ENCODE measurements at regions of chr3 and their contacts with region 1.

Region 1: DNA sequence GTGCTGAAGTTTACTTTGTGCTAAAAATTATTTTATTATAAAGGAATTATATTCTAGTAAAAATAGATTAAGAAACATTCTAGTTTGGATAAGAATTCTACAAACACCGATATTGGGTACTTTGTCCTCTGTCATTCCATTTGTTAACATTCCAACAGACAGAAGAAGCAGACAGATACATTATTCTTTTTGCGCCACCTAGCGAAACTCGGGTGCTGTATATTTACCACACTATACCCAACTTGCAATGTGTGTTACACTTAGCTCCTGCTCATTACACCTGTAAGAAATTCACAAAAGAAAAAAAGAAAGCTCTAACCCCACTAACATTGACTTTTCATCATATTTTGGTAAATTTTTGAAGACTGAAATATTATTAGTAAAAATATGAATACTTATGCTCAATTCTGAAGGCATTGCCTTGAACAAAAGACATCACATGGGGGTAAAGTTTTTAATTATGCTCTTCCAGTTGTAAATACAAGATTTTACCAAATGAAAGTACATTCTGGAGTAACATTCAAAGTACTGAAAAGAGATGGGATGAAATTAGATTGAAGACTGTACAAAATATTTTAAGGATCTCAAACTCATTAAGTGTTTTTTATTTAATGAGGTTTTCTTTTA is 136.5 kb upstream of the MLF1 start:
- DNase-seq: peak; percentile 64 to 69
- H3K4me3 ChIP-seq: no peak overlapping the region
- H3K4me3 Mint-ChIP-seq: no peak overlapping the region
- H3K27ac Mint-ChIP-seq: no peak overlapping the region
- H3K4me1 ChIP-seq: peaks cover 24% of the 10 kb centered on the region
- H3K4me1 Mint-ChIP-seq: no peaks in the 10 kb centered on the region
- H3K27me3 ChIP-seq: no peaks in the 10 kb centered on the region
- H3K27me3 Mint-ChIP-seq: no peaks in the 10 kb centered on the region
- CTCF ChIP-seq: peak; percentile 55 to 69

Region 2: DNA sequence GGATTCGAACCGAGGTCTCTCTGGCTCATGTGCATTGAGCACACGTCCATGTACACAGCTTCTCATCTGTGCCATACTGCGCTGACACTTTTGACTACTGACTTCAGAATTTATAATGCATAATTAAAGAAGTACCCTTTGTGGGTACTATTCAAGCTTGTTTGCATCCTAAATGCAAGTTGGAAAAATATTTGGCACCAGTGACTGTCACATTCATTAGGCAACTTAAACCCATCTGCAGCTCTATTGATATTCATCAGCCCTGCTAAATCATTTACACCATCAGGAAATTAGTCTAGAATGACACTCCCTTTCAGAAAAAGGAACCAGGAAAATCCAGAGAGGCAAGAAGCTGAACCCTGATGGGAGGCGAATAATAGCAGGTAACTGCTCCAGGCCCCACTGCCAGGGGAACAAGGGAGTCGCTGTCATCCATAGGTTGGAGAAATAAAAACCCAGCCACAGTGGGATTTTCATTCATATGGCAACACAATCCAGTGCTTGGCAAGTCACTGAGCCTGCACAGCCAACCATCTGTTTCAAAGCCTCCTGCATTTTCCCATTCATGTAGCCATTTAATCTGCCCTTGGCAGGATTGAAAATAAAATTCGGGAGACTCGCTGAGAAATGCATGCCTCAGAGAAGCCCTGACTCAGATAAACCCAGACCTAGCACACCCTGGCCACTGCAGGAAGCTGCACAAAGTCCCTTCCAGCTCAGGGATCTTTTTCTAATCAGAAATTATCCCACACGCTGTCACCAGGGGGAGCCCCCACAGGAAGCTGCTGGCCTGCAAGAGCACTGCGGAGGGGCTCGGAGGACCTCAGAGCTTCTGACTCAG is 828.3 kb before region 1 on chr3:
- CTCF ChIA-PET with region 1: no interaction called
- POLR2A ChIA-PET with region 1: no interaction called
- intact Hi-C with region 1: loop called (anchors 2 kb)
- DNase-seq: peak; percentile 72 to 79
- H3K4me3 ChIP-seq: no peak overlapping the region
- H3K4me3 Mint-ChIP-seq: no peak overlapping the region
- H3K27ac Mint-ChIP-seq: no peak overlapping the region
- H3K4me1 ChIP-seq: 0 out of 2 replicates have a peak, but pooled peaks cover 5% of the 10 kb centered on the region
- H3K4me1 Mint-ChIP-seq: no peaks in the 10 kb centered on the region
- H3K27me3 ChIP-seq: no peaks in the 10 kb centered on the region
- H3K27me3 Mint-ChIP-seq: no peaks in the 10 kb centered on the region
- CTCF ChIP-seq: peak; percentile 70 to 83

Region 3: DNA sequence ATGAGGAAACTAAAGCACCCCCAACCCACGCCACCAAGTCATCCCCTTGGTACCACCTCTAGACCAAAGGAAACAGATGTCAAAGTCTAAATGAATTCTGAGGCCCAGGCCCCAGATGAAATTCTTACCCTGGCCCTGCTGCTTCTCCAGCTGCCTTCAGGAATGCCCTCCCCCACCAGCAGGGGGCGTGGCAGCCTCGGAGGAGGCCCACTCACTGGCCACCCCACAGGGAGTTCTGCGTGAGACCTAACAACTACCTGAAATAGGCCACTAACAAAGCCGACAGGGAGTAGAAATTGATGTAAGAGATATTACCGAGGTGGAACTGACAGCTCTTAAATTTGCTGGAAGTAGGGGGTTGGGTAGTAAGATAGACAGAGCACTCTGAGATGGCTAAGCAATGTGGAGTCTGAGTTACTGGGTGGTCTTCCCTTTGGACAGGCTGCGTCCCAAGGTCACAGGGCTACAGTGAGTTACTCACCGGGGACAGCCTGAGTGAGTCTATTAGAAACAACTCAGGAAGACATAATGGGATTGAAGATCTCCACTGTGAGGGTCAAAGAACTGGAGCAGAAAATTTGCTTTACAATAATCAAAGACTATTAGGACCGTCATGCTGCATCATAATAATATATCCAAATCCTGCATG is 569.0 kb before region 1 on chr3:
- CTCF ChIA-PET with region 1: no interaction called
- POLR2A ChIA-PET with region 1: no interaction called
- intact Hi-C with region 1: loop called (anchors 1 kb)
- DNase-seq: peak; percentile 53 to 74
- H3K4me3 ChIP-seq: no peak overlapping the region
- H3K4me3 Mint-ChIP-seq: no peak overlapping the region
- H3K27ac Mint-ChIP-seq: no peak overlapping the region
- H3K4me1 ChIP-seq: no peaks in the 10 kb centered on the region
- H3K4me1 Mint-ChIP-seq: no peaks in the 10 kb centered on the region
- H3K27me3 ChIP-seq: no peaks in the 10 kb centered on the region
- H3K27me3 Mint-ChIP-seq: peaks cover 4% of the 10 kb centered on the region
- CTCF ChIP-seq: peak; percentile 74 to 85

Region 4: DNA sequence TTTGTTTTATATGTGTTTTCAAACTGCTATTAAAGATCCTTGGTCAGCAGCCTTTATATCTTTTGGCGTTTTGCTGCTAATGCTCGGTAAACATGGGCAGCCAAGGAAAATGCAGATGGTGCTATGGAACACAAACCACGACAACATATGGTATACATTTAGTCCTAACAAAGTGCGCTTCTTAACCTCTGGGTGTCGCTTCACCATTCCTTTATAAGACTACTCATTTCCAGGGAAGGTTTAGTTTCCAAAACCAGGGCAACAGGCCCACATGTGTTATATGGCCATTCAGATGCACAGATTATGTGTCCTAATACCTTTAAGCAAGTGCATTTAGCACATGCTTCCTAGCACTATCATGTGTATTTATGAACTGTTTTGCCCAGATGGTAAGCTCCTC is 343.0 kb before region 1 on chr3:
- CTCF ChIA-PET with region 1: no interaction called
- POLR2A ChIA-PET with region 1: no interaction called
- intact Hi-C with region 1: loop called (anchors 1 kb)
- DNase-seq: no peak
- H3K4me3 ChIP-seq: no peak overlapping the region
- H3K4me3 Mint-ChIP-seq: no peak overlapping the region
- H3K27ac Mint-ChIP-seq: no peak overlapping the region
- H3K4me1 ChIP-seq: no peaks in the 10 kb centered on the region
- H3K4me1 Mint-ChIP-seq: no peaks in the 10 kb centered on the region
- H3K27me3 ChIP-seq: no peaks in the 10 kb centered on the region
- H3K27me3 Mint-ChIP-seq: no peaks in the 10 kb centered on the region
- CTCF ChIP-seq: peak in 1 of 2 experiments; percentile 31

Region 5: GRCh38 chr3:158337110-158337509 is 97.4 kb before region 1 on chr3:
- CTCF ChIA-PET with region 1: no interaction called
- POLR2A ChIA-PET with region 1: no interaction called
- intact Hi-C with region 1: no loop called
- DNase-seq: no peak
- H3K4me3 ChIP-seq: no peak overlapping the region
- H3K4me3 Mint-ChIP-seq: no peak overlapping the region
- H3K27ac Mint-ChIP-seq: no peak overlapping the region
- H3K4me1 ChIP-seq: no peaks in the 10 kb centered on the region
- H3K4me1 Mint-ChIP-seq: no peaks in the 10 kb centered on the region
- H3K27me3 ChIP-seq: no peaks in the 10 kb centered on the region
- H3K27me3 Mint-ChIP-seq: no peaks in the 10 kb centered on the region
- CTCF ChIP-seq: no peak

Region 6: GRCh38 chr3:158368271-158368670 is 66.3 kb before region 1 on chr3:
- CTCF ChIA-PET with region 1: no interaction called
- POLR2A ChIA-PET with region 1: no interaction called
- intact Hi-C with region 1: loop called (anchors 5 kb)
- DNase-seq: peak in 1 of 2 experiments; percentile 26
- H3K4me3 ChIP-seq: no peak overlapping the region
- H3K4me3 Mint-ChIP-seq: no peak overlapping the region
- H3K27ac Mint-ChIP-seq: no peak overlapping the region
- H3K4me1 ChIP-seq: 0 out of 2 replicates have a peak, but pooled peaks cover 7% of the 10 kb centered on the region
- H3K4me1 Mint-ChIP-seq: no peaks in the 10 kb centered on the region
- H3K27me3 ChIP-seq: no peaks in the 10 kb centered on the region
- H3K27me3 Mint-ChIP-seq: no peaks in the 10 kb centered on the region
- CTCF ChIP-seq: no peak

Region 7: DNA sequence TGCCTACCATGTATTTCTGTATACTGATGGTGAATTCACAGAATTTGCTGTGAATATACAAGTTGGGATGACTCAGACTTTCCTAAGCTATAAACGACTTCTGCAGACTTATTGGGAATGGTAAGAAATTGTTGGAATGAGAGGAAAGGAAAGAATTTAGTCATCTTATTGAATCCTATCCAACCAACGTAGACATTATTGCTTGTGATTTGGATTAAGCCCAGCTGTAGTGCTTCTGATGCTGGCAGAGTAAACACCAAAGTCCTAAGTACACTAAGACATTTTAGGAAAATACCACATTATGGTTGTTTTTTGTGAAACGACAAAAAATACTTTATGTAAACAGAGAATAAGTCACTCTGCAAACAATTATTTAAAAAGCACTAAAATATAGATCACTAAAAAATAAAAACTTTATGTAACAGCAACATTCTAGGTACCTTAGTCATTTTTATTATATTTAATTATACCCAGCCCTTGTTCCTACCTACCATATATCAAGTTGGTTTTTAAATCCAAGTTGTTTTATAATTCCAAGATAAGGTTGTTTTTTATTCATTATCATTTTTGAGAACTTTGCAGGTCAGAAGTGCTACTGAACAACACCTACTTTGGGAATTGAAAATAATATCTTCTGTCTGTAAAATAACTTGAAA is 37.2 kb after region 1 on chr3:
- CTCF ChIA-PET with region 1: no interaction called
- POLR2A ChIA-PET with region 1: no interaction called
- intact Hi-C with region 1: no loop called
- DNase-seq: no peak
- H3K4me3 ChIP-seq: no peak overlapping the region
- H3K4me3 Mint-ChIP-seq: no peak overlapping the region
- H3K27ac Mint-ChIP-seq: no peak overlapping the region
- H3K4me1 ChIP-seq: no peaks in the 10 kb centered on the region
- H3K4me1 Mint-ChIP-seq: no peaks in the 10 kb centered on the region
- H3K27me3 ChIP-seq: no peaks in the 10 kb centered on the region
- H3K27me3 Mint-ChIP-seq: no peaks in the 10 kb centered on the region
- CTCF ChIP-seq: no peak

Region 8: GRCh38 chr3:158522221-158523136 is 88.0 kb after region 1 on chr3:
- CTCF ChIA-PET with region 1: no interaction called
- POLR2A ChIA-PET with region 1: no interaction called
- intact Hi-C with region 1: no loop called
- DNase-seq: no peak
- H3K4me3 ChIP-seq: no peak overlapping the region
- H3K4me3 Mint-ChIP-seq: no peak overlapping the region
- H3K27ac Mint-ChIP-seq: no peak overlapping the region
- H3K4me1 ChIP-seq: no peaks in the 10 kb centered on the region
- H3K4me1 Mint-ChIP-seq: no peaks in the 10 kb centered on the region
- H3K27me3 ChIP-seq: no peaks in the 10 kb centered on the region
- H3K27me3 Mint-ChIP-seq: no peaks in the 10 kb centered on the region
- CTCF ChIP-seq: no peak

Measured in Caco-2 (cell line).